PC-3 (cell line): ENCODE measurements at regions of chr5 and their contacts with region 1.

Region 1: DNA sequence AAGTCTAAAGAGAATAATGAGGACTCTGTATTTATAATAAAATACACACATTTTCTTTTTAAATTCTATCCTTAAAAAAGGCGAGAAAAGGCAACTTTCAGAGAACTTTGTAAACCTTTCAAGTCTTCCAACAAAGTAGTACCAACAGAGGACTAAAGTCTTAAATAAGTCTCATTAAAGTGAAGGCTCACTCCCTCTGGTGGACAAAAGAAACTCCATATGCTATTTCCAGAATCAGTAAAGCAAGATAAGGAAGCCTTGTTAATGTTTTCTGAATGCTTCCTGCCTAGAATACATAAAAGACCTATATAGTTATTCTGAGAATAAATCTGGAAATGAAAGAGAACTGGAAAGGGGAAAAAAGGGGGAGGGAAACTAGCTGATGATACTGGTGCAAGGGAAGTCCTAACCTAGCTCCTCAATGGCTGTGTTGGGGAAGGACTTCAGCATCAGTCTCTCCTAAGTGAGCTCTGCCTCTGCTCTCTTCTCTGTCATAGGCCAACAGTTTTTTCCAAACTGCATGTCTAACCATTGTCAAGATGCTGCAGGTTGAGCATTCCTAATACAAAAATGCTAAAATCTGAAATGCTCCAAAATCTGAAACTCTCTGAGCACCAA is 7.2 kb downstream of the HMGCS1 start:
- DNase-seq: peak; percentile 88
- ATAC-seq: peak; percentile 84
- H3K4me3 ChIP-seq: no peak overlapping the region
- H3K27ac ChIP-seq: no peak overlapping the region
- H3K4me1 ChIP-seq: peaks cover 18% of the 10 kb centered on the region
- H3K27me3 ChIP-seq: no peaks in the 10 kb centered on the region
- CTCF ChIP-seq: peak; percentile 93

Region 2: DNA sequence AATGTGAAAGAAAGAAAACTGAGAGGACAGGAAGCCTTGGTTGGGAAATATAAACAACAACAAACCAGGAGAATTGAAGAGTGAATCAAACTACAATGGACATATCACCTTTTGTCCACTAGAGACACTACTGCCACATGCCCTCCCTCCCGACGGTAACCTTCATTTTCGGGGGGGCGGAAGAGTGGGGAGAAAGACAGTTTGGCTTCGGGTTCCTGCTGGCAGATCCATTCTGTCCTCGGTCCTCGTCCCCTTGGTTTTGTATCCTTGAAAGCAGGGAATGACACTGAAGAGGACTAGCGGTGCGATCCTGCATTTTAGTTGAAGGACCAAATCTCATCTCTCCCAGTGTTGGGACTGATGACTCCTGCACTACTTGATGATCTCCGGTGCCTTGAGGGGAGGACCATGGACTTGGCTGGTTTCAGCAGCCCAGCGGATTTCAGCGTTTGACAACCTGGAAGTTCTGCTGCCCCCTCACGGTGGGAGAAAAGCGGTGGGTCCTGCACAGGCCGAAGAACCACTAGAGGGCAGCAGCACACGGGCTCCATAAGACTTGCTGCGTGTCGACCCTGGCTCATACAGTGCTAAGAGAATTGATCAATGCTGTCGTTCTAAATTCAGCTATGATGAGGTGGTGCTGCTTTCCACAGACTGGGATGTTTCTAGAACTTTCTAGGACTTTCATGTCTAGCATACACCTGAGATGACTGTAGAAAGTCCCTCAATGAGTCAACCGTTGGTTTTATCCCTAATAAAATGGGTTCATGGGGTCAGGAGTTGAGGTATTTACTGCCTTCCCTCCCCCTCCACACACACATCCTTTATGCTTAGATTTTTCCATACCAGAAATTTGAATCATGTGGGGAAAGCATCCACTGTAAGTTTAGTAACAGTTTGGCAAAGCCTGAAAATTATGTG is 200.4 kb before region 1 on chr5:
- CTCF ChIA-PET with region 1: no interaction called
- POLR2A ChIA-PET with region 1: no interaction called
- intact Hi-C with region 1: loop called (anchors 1 kb)
- DNase-seq: peak; percentile 98
- ATAC-seq: peak; percentile 93
- H3K4me3 ChIP-seq: peak overlapping the region; percentile 67
- H3K27ac ChIP-seq: peak overlapping the region; percentile 31
- H3K4me1 ChIP-seq: peaks cover 12% of the 10 kb centered on the region
- H3K27me3 ChIP-seq: no peaks in the 10 kb centered on the region
- CTCF ChIP-seq: peak; percentile 100

Region 3: DNA sequence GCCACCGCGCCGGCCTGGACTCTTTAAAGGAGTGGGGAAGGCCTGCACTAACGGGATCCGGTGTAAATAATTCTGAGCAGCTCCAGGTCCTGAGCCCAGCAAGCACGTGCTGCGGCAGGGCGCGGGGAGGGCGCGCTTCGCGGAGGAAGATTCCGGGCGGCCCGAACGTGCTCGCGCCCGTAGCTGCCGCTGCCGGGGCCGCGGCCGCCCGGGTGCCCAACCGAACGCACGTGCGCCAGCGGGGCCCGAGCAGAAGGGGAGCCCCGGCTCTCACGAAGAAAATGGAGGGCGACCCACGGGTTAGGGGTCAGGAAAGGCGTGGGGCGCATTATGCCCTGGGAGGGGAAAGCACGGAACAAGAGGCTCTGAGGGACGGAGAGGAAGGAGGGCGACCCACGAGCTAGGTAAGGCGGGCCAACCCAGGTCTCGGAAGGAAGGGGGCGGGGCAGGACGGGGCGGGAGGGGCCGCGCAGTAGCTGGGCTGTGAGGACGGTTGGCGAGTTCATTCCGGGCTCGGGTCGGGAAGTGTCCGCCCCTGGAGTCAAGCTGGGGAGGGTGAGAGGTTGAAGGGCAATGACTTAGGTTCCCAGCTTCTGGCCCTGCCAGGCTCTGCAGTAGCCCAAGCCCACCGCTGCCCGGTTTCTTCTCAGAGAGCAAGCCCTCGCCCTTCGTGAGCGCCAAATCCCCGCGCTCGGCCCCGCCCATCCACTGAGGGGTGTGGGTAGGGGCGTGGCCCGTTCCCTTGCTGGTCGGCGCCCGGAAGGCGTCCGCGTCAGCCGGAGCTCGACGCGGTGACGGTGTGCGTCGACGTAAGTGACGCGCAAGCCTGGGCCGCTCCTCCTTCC is 185.1 kb before region 1 on chr5 and contains the start of gene ZNF131:
- CTCF ChIA-PET with region 1: no interaction called
- POLR2A ChIA-PET with region 1: no interaction called
- intact Hi-C with region 1: loop called (anchors 5 kb)
- DNase-seq: peak; percentile 99
- ATAC-seq: peak; percentile 94
- H3K4me3 ChIP-seq: peak within 1 kb of the TSS; percentile 79
- H3K27ac ChIP-seq: peak within 1 kb of the TSS; percentile 92
- H3K4me1 ChIP-seq: peaks cover 27% of the 10 kb centered on the region
- H3K27me3 ChIP-seq: no peaks in the 10 kb centered on the region
- CTCF ChIP-seq: no peak
- total RNA-seq, gene ZNF131: 37.3 and 41.5 TPM in 2 replicates

Region 4: GRCh38 chr5:43140286-43140685 is 165.8 kb before region 1 on chr5:
- CTCF ChIA-PET with region 1: no interaction called
- POLR2A ChIA-PET with region 1: no interaction called
- intact Hi-C with region 1: no loop called
- DNase-seq: no peak
- ATAC-seq: no peak
- H3K4me3 ChIP-seq: no peak overlapping the region
- H3K27ac ChIP-seq: no peak overlapping the region
- H3K4me1 ChIP-seq: no peaks in the 10 kb centered on the region
- H3K27me3 ChIP-seq: no peaks in the 10 kb centered on the region
- CTCF ChIP-seq: no peak

Region 5: GRCh38 chr5:43207601-43208000 is 98.5 kb before region 1 on chr5:
- CTCF ChIA-PET with region 1: interaction called, 5 read pairs
- POLR2A ChIA-PET with region 1: no interaction called
- intact Hi-C with region 1: loop called (anchors 2 kb)
- DNase-seq: peak; percentile 66
- ATAC-seq: no peak
- H3K4me3 ChIP-seq: no peak overlapping the region
- H3K27ac ChIP-seq: no peak overlapping the region
- H3K4me1 ChIP-seq: peaks cover 27% of the 10 kb centered on the region
- H3K27me3 ChIP-seq: no peaks in the 10 kb centered on the region
- CTCF ChIP-seq: no peak

Region 6: GRCh38 chr5:43227655-43228054 is 78.4 kb before region 1 on chr5:
- CTCF ChIA-PET with region 1: interaction called, 3 read pairs
- POLR2A ChIA-PET with region 1: no interaction called
- intact Hi-C with region 1: loop called (anchors 2 kb)
- DNase-seq: peak; percentile 84
- ATAC-seq: peak; percentile 60
- H3K4me3 ChIP-seq: no peak overlapping the region
- H3K27ac ChIP-seq: no peak overlapping the region
- H3K4me1 ChIP-seq: peaks cover 3% of the 10 kb centered on the region; the same call in 1 of the 2 replicates
- H3K27me3 ChIP-seq: no peaks in the 10 kb centered on the region
- CTCF ChIP-seq: peak; percentile 80

Region 7: DNA sequence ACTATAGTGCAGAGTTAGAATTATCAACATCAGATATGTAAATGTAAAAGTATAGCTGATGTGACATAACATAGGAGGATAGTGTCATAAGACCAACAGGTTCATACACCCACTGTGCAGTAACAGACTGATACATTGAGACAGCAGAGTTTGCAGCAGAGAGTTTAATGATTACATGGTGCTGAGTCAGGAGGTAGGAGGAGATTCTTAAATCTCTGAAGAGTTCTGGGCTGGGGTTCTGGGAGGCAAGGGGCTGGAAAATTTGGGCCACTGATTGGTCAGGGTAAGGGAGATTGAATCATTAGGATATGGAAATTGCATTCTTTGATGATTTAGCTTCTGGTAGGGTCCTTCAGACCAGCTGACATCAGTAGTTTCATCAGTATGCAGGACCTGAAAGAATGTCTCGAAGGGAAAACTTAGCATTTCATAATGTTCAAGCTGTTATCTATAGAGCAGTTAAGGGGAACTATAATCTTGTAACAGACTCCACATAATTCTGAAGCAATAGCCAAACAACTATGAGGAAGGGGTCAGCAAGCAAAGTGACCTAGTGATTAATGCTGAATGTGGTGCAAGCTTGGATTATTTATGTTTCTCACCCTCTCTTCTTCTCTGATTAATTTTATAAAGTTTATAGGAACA is 70.6 kb after region 1 on chr5:
- CTCF ChIA-PET with region 1: no interaction called
- POLR2A ChIA-PET with region 1: no interaction called
- intact Hi-C with region 1: no loop called
- DNase-seq: no peak
- ATAC-seq: no peak
- H3K4me3 ChIP-seq: no peak overlapping the region
- H3K27ac ChIP-seq: no peak overlapping the region
- H3K4me1 ChIP-seq: no peaks in the 10 kb centered on the region
- H3K27me3 ChIP-seq: no peaks in the 10 kb centered on the region
- CTCF ChIP-seq: no peak